H1 (cell line): ENCODE measurements at regions of chr5 and their contacts with region 1.

Region 1: GRCh38 chr5:10452768-10453331 is 11.2 kb downstream of the ROPN1L start:
- DNase-seq: no peak
- H3K4me3 ChIP-seq: no peak overlapping the region
- H3K27ac ChIP-seq: no peak overlapping the region
- H3K4me1 ChIP-seq: peaks cover 3 to 14% (median 7%) of the 10 kb centered on the region in 4 experiments
- H3K27me3 ChIP-seq: no peaks in the 10 kb centered on the region
- CTCF ChIP-seq: peak in 2 of 3 experiments; percentile 74 to 79; a peak in 3 of 4 replicates
- EP300 ChIP-seq: no peak
- POLR2A ChIP-seq: no peak
- RAD21 ChIP-seq: peak; percentile 98 to 99

Region 2: GRCh38 chr5:10501554-10502075 is 48.8 kb after region 1 on chr5:
- CTCF ChIA-PET with region 1: interaction called, 29 read pairs
- POLR2A ChIA-PET with region 1: no interaction called
- DNase-seq: no peak
- H3K4me3 ChIP-seq: no peak overlapping the region
- H3K27ac ChIP-seq: no peak overlapping the region
- H3K4me1 ChIP-seq: peaks cover 0 to 3% (median 0%) of the 10 kb centered on the region in 4 experiments; a peak in 1 of 7 replicates
- H3K27me3 ChIP-seq: no peaks in the 10 kb centered on the region
- CTCF ChIP-seq: no peak
- EP300 ChIP-seq: no peak
- POLR2A ChIP-seq: no peak
- RAD21 ChIP-seq: no peak

Region 3: DNA sequence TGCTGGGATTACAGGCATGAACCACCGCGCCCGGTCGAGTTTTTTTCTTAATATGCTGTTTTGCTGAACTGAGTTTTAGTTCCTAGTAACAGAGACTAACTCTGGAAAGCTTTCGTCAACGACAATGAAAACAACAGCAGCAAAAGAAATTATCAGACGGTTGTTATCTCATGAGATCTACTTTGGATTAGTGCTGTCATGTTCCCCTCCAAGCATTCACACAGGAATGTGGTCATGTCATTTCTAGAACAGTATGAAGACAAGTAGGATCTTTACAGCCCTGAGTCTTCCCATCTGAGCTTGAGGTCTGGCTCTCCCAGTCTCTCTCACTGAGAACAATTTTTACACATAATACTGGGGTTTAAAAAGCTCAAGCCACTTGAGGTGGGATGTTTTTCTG is 107.0 kb after region 1 on chr5:
- CTCF ChIA-PET with region 1: interaction called, 18 read pairs
- POLR2A ChIA-PET with region 1: no interaction called
- DNase-seq: no peak
- H3K4me3 ChIP-seq: no peak overlapping the region
- H3K27ac ChIP-seq: no peak overlapping the region
- H3K4me1 ChIP-seq: peaks cover 2 to 7% (median 4%) of the 10 kb centered on the region in 4 experiments; a peak in 5 of 7 replicates
- H3K27me3 ChIP-seq: peaks cover 11 to 28% (median 26%) of the 10 kb centered on the region in 4 experiments
- CTCF ChIP-seq: no peak
- EP300 ChIP-seq: no peak
- POLR2A ChIP-seq: no peak
- RAD21 ChIP-seq: no peak

Region 4: DNA sequence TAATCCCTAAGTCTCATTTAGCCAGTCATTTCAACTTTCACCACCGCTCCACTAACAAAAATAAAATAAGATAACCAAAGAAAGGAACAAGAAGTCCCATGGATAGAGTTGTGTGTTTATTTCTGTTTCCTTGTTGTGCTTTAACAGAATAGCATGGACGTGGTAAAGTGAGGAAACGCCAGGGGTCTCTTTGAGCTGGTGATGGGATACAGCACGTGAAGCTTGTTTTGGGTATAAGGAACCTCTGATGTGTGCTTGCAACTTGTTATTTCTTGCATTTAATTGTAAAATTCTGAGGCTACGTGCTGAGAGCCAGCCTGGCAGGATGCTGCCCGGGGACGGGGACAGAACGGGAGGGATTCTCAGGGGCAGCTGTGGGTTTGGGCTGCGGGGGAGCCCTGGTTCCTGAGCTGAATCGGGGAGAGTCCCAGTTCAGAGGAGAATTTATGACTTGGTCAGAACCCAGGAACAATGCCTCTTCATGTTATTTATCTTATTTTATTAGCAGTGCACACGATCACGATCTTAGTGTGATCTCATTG is 174.4 kb after region 1 on chr5:
- CTCF ChIA-PET with region 1: interaction called, 199 read pairs
- POLR2A ChIA-PET with region 1: interaction called, 6 read pairs
- DNase-seq: peak in 1 of 2 experiments; percentile 61
- H3K4me3 ChIP-seq: peak overlapping the region; percentile 21 to 54 (median 46); a peak in 5 of 8 replicates
- H3K27ac ChIP-seq: no peak overlapping the region
- H3K4me1 ChIP-seq: peaks cover 0 to 12% (median 9%) of the 10 kb centered on the region in 4 experiments; a peak in 6 of 7 replicates
- H3K27me3 ChIP-seq: no peaks in the 10 kb centered on the region
- CTCF ChIP-seq: peak in 1 of 3 experiments; percentile 6; a peak in 1 of 4 replicates
- EP300 ChIP-seq: no peak
- POLR2A ChIP-seq: 0 out of 3 replicates have a peak, but pooled peaks of 1 of the 2 experiments have one; percentile 41
- RAD21 ChIP-seq: no peak

Region 5: DNA sequence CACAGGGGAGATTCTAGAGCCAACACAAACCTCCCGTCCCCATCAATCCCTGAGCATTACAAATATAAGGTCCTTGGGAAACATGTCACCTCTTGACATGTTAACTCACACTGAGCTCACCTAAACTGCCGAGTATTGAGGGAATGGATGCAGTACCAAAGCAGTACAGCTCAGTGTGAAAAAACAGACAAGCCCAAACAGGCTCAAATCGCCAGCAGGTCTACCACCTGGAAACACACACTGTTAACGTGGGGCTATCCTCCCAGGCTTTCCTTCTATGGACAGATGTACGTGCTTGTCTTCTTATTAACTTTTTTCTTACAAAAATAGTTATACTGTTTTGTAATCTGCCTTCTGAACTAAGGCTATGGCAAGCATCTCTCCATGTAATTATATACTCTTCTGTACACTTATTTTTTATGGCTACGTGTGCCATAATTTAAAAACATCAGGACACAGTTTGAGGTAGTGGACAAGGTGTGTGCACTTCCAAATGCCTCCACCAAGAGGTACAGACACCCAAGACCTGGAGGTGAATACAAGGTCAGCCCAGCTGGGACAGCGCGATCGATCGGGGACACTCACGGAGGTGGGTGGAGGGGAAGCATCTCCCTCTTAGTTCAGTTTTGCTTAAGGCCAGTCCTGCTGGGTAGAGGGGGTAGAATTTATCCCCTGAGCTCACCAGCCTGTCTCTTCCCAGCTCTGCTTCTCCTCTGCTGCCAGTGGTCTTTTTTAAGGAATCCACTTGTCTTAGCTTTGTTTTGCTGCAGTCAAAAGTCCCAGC is 231.6 kb after region 1 on chr5:
- CTCF ChIA-PET with region 1: interaction called, 132 read pairs
- POLR2A ChIA-PET with region 1: interaction called, 3 read pairs
- DNase-seq: no peak
- H3K4me3 ChIP-seq: no peak overlapping the region
- H3K27ac ChIP-seq: no peak overlapping the region
- H3K4me1 ChIP-seq: peaks cover 0 to 11% (median 3%) of the 10 kb centered on the region in 4 experiments; a peak in 6 of 7 replicates
- H3K27me3 ChIP-seq: no peaks in the 10 kb centered on the region
- CTCF ChIP-seq: no peak
- EP300 ChIP-seq: no peak
- POLR2A ChIP-seq: no peak
- RAD21 ChIP-seq: no peak